Activated B cell treated with CpG ODN at 0.5 μM for 24 hours (primary cell): ENCODE measurements at regions of chr5 and their contacts with region 1.

Region 1: GRCh38 chr5:132495667-132496190 is 5.2 kb upstream of the IRF1 start:
- DNase-seq: peak; percentile 79
- ATAC-seq: peak; percentile 63
- H3K4me3 Mint-ChIP-seq: peak overlapping the region; percentile 92
- H3K27ac Mint-ChIP-seq: peak overlapping the region; percentile 96
- H3K4me1 Mint-ChIP-seq: peaks cover 64% of the 10 kb centered on the region
- H3K27me3 Mint-ChIP-seq: no peaks in the 10 kb centered on the region
- CTCF ChIP-seq: no peak

Region 2: GRCh38 chr5:132103332-132103951 is 392.3 kb before region 1 on chr5:
- CTCF ChIA-PET with region 1: no interaction called
- POLR2A ChIA-PET with region 1: interaction called, 9 read pairs
- intact Hi-C with region 1: loop called (anchors 1 kb)
- DNase-seq: no peak
- ATAC-seq: peak; percentile 70
- H3K4me3 Mint-ChIP-seq: peak overlapping the region; percentile 53
- H3K27ac Mint-ChIP-seq: peak overlapping the region; percentile 84
- H3K4me1 Mint-ChIP-seq: peaks cover 82% of the 10 kb centered on the region
- H3K27me3 Mint-ChIP-seq: no peaks in the 10 kb centered on the region
- CTCF ChIP-seq: no peak

Region 3: GRCh38 chr5:132386644-132387286 is 109.0 kb before region 1 on chr5:
- CTCF ChIA-PET with region 1: interaction called, 253 read pairs
- POLR2A ChIA-PET with region 1: interaction called, 34 read pairs
- intact Hi-C with region 1: no loop called
- DNase-seq: peak; percentile 62
- ATAC-seq: peak; percentile 92
- H3K4me3 Mint-ChIP-seq: no peak overlapping the region
- H3K27ac Mint-ChIP-seq: peak overlapping the region; percentile 39
- H3K4me1 Mint-ChIP-seq: peaks cover 21% of the 10 kb centered on the region
- H3K27me3 Mint-ChIP-seq: no peaks in the 10 kb centered on the region
- CTCF ChIP-seq: no peak

Region 4: GRCh38 chr5:132419502-132420468 is 75.9 kb before region 1 on chr5:
- CTCF ChIA-PET with region 1: interaction called, 47 read pairs
- POLR2A ChIA-PET with region 1: interaction called, 461 read pairs
- intact Hi-C with region 1: loop called (anchors 1 kb)
- DNase-seq: peak; percentile 62
- ATAC-seq: peak; percentile 35
- H3K4me3 Mint-ChIP-seq: peak overlapping the region; percentile 82
- H3K27ac Mint-ChIP-seq: peak overlapping the region; percentile 90
- H3K4me1 Mint-ChIP-seq: peaks cover 97% of the 10 kb centered on the region
- H3K27me3 Mint-ChIP-seq: no peaks in the 10 kb centered on the region
- CTCF ChIP-seq: peak; percentile 51

Region 5: GRCh38 chr5:132456296-132457001 is 39.3 kb before region 1 on chr5:
- CTCF ChIA-PET with region 1: interaction called, 27 read pairs
- POLR2A ChIA-PET with region 1: interaction called, 164 read pairs
- intact Hi-C with region 1: loop called (anchors 1 kb)
- DNase-seq: peak; percentile 56
- ATAC-seq: peak; percentile 78
- H3K4me3 Mint-ChIP-seq: peak overlapping the region; percentile 75
- H3K27ac Mint-ChIP-seq: peak overlapping the region; percentile 99
- H3K4me1 Mint-ChIP-seq: peaks cover 92% of the 10 kb centered on the region
- H3K27me3 Mint-ChIP-seq: no peaks in the 10 kb centered on the region
- CTCF ChIP-seq: no peak

Region 6: DNA sequence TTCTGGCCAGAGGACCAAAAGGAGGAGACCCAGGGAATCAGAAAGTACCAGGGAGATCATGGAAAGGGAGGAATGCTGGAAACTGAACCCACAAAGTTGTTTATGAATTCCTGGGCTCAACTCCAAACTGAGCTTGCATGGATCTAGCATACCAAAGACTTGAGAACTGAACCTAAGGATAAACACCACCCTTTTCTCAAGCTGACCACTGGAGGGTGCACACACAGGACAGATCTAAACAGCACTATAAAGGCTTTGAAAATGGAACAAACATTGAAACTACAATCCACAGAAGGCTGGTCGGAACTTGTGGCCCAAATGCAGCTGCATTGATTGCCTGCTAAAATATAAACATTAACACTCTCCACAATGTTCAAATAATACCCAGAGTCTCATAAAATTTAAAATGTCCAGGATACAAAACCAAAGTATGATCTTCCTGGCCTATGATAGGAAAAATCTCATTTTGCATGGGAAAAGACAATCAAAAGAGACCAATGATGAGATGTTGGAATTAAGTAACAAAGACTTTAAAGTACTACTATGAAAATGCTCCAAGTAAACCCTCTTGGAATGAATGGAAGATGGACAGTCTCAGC is 10.5 kb after region 1 on chr5:
- CTCF ChIA-PET with region 1: interaction called, 52 read pairs
- POLR2A ChIA-PET with region 1: interaction called, 99 read pairs
- intact Hi-C with region 1: no loop called
- DNase-seq: no peak
- ATAC-seq: peak; percentile 52
- H3K4me3 Mint-ChIP-seq: no peak overlapping the region
- H3K27ac Mint-ChIP-seq: no peak overlapping the region
- H3K4me1 Mint-ChIP-seq: peaks cover 7% of the 10 kb centered on the region
- H3K27me3 Mint-ChIP-seq: no peaks in the 10 kb centered on the region
- CTCF ChIP-seq: no peak

Region 7: DNA sequence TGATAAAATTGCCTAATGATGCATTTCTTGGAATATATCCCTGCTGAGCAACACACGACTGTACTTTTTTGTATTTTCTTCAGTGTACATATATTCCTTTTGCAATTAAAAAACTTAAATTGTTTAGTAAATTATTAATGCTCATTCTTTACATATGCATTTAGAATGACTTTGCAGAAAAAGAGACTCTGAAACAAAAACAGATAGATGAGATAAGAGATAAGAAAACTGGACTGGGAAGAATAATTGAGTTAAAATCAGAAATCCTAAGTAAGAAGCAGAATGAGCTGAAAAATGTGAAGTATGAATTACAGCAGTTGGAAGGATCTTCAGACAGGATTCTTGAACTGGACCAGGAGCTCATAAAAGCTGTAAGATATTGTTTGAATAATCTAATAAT is 93.7 kb after region 1 on chr5:
- CTCF ChIA-PET with region 1: no interaction called
- POLR2A ChIA-PET with region 1: no interaction called
- intact Hi-C with region 1: no loop called
- DNase-seq: no peak
- ATAC-seq: no peak
- H3K4me3 Mint-ChIP-seq: no peak overlapping the region
- H3K27ac Mint-ChIP-seq: no peak overlapping the region
- H3K4me1 Mint-ChIP-seq: no peaks in the 10 kb centered on the region
- H3K27me3 Mint-ChIP-seq: no peaks in the 10 kb centered on the region
- CTCF ChIP-seq: no peak

Region 8: DNA sequence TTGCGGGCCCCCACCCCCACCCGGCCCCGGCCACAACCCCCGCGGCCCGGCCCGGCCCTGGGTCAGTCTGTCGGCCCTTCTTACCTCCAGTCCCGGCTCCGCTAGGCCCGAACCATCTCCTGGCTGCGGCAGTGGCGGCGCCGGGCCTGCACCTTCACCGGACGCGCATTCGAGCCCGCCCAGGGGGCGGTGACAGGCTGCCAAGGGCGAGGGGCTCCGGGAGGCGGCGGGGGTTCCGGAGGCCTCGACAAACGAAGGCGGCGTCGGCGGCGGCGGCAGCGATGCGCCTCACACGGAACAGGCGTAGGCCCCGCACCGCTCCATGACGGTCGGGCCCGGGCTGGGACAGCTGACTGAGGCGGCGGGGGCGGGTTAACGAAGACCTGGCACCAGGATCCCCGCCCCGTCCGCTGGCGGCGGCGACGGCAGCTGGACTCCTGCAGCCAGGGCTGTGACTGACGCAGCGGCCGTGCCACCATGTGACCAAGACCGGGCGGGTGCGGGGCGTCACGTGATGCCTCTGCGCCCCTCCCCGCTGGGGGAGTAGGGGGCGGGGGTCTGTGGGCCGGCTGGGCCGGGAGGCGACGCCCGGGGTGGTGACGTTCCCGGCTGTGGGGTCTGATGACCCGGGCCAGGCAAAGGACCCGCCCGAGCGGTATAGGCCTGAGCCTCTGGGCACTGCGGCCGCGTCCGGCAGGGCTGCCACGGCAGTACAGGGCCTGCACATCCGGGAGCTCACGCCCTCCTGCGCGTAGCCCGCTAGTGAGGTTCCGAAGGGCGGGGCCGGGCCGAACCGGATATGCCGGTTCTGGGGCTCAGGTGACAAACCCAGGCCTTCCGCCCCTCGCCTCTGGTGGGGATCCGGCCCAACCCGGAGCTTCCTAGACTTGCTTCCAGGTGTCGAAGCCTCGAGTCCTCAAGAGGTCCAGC is 467.7 kb after region 1 on chr5 and contains the start of gene AFF4:
- CTCF ChIA-PET with region 1: no interaction called
- POLR2A ChIA-PET with region 1: interaction called, 18 read pairs
- intact Hi-C with region 1: loop called (anchors 1 kb)
- DNase-seq: peak; percentile 94
- ATAC-seq: peak; percentile 86
- H3K4me3 Mint-ChIP-seq: peak within 1 kb of the TSS; percentile 94
- H3K27ac Mint-ChIP-seq: peak within 1 kb of the TSS; percentile 94
- H3K4me1 Mint-ChIP-seq: peaks cover 37% of the 10 kb centered on the region
- H3K27me3 Mint-ChIP-seq: no peaks in the 10 kb centered on the region
- CTCF ChIP-seq: no peak
- total RNA-seq, gene AFF4: 42.7 and 51.8 TPM in 2 replicates